ENCODE measurements at regions of chr17 and their contacts with region 1.

Region 1: GRCh38 chr17:80082403-80083135 is 18.8 kb upstream of the GAA start:
- DNase-seq: peak; percentile 85
- ATAC-seq: peak; percentile 81
- H3K4me3 Mint-ChIP-seq: no peak overlapping the region
- H3K27ac Mint-ChIP-seq: no peak overlapping the region
- H3K4me1 Mint-ChIP-seq: peaks cover 8% of the 10 kb centered on the region; the same call in 1 of the 2 replicates
- H3K27me3 Mint-ChIP-seq: no peaks in the 10 kb centered on the region
- CTCF ChIP-seq: peak; percentile 40; the same call in 1 of the 2 replicates

Region 2: GRCh38 chr17:80107231-80108021 is 24.9 kb after region 1 on chr17:
- CTCF ChIA-PET with region 1: no interaction called
- POLR2A ChIA-PET with region 1: no interaction called
- DNase-seq: peak; percentile 9
- ATAC-seq: no peak
- H3K4me3 Mint-ChIP-seq: no peak overlapping the region
- H3K27ac Mint-ChIP-seq: no peak overlapping the region
- H3K4me1 Mint-ChIP-seq: peaks cover 11% of the 10 kb centered on the region
- H3K27me3 Mint-ChIP-seq: no peaks in the 10 kb centered on the region
- CTCF ChIP-seq: no peak

Region 3: GRCh38 chr17:80154166-80154565 is 71.6 kb after region 1 on chr17:
- CTCF ChIA-PET with region 1: no interaction called
- POLR2A ChIA-PET with region 1: interaction called, 14 read pairs
- DNase-seq: no peak
- ATAC-seq: peak; percentile 66
- H3K4me3 Mint-ChIP-seq: no peak overlapping the region
- H3K27ac Mint-ChIP-seq: peak overlapping the region; percentile 8; the same call in 1 of the 2 replicates
- H3K4me1 Mint-ChIP-seq: peaks cover 32% of the 10 kb centered on the region
- H3K27me3 Mint-ChIP-seq: peaks cover 19% of the 10 kb centered on the region
- CTCF ChIP-seq: no peak